ENCODE measurements at regions of chr1 and their contacts with region 1.

Region 1: GRCh38 chr1:55164906-55165305 is 50.3 kb downstream of the USP24 start:
- DNase-seq: no peak
- ATAC-seq: no peak
- H3K4me3 Mint-ChIP-seq: no peak overlapping the region
- H3K27ac Mint-ChIP-seq: peak overlapping the region; percentile 47
- H3K4me1 Mint-ChIP-seq: no peaks in the 10 kb centered on the region
- H3K27me3 Mint-ChIP-seq: no peaks in the 10 kb centered on the region
- CTCF ChIP-seq: no peak

Region 2: GRCh38 chr1:55150880-55151588 is 13.9 kb before region 1 on chr1:
- CTCF ChIA-PET with region 1: no interaction called
- POLR2A ChIA-PET with region 1: interaction called, 3 read pairs
- intact Hi-C with region 1: loop called (anchors 2 kb)
- DNase-seq: no peak
- ATAC-seq: peak; percentile 66
- H3K4me3 Mint-ChIP-seq: no peak overlapping the region
- H3K27ac Mint-ChIP-seq: peak overlapping the region; percentile 83
- H3K4me1 Mint-ChIP-seq: peaks cover 18% of the 10 kb centered on the region
- H3K27me3 Mint-ChIP-seq: no peaks in the 10 kb centered on the region
- CTCF ChIP-seq: no peak

Region 3: GRCh38 chr1:55215256-55216021 is 50.5 kb after region 1 on chr1 and contains the start of gene USP24:
- CTCF ChIA-PET with region 1: no interaction called
- POLR2A ChIA-PET with region 1: no interaction called
- intact Hi-C with region 1: loop called (anchors 5 kb)
- DNase-seq: peak; percentile 79
- ATAC-seq: peak; percentile 76
- H3K4me3 Mint-ChIP-seq: peak within 1 kb of the TSS; percentile 92
- H3K27ac Mint-ChIP-seq: peak within 1 kb of the TSS; percentile 97
- H3K4me1 Mint-ChIP-seq: peaks cover 65% of the 10 kb centered on the region
- H3K27me3 Mint-ChIP-seq: no peaks in the 10 kb centered on the region
- CTCF ChIP-seq: no peak
- total RNA-seq, gene USP24: 91.4 and 93.2 TPM in 2 replicates

Measured in activated B cell treated with CpG ODN at 0.5 μM for 24 hours (primary cell).